Activated CD4-positive, alpha-beta T cell treated with anti-CD3 and anti-CD28 coated beads, Interleukin-2, amount 10 ng/mL, durations not matched to agents 24 days and 14 days (primary cell): ENCODE measurements at regions of chr3 and their contacts with region 1.

Region 1: DNA sequence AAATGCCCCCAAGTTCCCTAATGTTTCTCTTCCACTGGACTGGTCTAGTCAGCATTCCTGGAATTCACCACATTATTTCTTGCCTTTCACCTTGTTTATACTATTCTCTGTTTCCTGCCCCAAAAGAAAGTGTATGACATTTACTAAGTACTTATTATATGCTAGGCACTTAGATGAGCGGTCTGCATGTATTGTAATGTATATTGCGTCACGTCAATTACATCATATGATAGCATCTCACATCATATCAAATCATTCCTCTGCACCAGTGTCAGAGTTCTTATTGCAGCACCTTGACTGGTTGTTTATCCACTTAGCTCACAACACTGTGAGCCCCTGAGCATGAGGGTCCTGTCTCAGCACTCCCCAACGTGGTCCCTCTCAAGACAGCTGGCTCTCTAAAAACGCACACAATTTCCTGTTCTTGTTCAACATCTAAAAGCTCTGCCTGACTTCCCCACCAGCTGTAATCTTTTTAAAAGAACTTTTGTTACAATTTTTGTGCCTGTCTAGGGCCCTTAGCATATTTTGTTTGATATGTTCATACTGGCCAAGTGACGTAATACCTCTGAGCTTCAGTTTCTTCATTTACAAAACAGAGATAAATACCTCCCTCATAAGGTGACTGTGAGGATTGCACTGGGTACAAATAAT is 58.8 kb downstream of the ARHGAP31 start:
- DNase-seq: peak; percentile 60
- H3K4me3 Mint-ChIP-seq: peak overlapping the region; percentile 14
- H3K27ac Mint-ChIP-seq: no peak overlapping the region
- H3K4me1 Mint-ChIP-seq: peaks cover 22% of the 10 kb centered on the region
- H3K27me3 Mint-ChIP-seq: peaks cover 5% of the 10 kb centered on the region

Region 2: DNA sequence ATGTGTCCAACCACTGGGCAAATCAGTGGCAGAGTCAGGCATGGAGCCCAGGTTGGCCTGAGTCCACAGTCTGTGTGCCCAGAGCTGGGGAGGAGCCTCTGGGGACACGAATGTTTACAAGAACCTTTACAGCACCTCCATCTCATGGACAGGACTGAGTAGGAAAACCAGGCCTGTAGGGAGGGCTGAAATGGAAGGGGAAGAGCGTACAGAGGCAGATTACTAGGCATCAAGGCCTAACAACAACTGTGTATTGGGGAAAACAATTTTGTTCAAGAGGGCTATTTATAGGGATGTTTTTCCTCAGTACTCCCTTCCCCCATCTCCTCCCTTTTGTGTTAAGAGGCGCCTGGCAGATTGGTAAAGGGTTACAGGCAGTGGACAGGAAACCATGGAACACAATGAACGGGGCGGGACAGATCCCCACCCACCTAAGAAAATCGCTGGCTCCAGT is 73.8 kb before region 1 on chr3:
- intact Hi-C with region 1: loop called (anchors 1 kb)
- DNase-seq: no peak
- H3K4me3 Mint-ChIP-seq: no peak overlapping the region
- H3K27ac Mint-ChIP-seq: no peak overlapping the region
- H3K4me1 Mint-ChIP-seq: peaks cover 7% of the 10 kb centered on the region
- H3K27me3 Mint-ChIP-seq: peaks cover 5% of the 10 kb centered on the region

Region 3: DNA sequence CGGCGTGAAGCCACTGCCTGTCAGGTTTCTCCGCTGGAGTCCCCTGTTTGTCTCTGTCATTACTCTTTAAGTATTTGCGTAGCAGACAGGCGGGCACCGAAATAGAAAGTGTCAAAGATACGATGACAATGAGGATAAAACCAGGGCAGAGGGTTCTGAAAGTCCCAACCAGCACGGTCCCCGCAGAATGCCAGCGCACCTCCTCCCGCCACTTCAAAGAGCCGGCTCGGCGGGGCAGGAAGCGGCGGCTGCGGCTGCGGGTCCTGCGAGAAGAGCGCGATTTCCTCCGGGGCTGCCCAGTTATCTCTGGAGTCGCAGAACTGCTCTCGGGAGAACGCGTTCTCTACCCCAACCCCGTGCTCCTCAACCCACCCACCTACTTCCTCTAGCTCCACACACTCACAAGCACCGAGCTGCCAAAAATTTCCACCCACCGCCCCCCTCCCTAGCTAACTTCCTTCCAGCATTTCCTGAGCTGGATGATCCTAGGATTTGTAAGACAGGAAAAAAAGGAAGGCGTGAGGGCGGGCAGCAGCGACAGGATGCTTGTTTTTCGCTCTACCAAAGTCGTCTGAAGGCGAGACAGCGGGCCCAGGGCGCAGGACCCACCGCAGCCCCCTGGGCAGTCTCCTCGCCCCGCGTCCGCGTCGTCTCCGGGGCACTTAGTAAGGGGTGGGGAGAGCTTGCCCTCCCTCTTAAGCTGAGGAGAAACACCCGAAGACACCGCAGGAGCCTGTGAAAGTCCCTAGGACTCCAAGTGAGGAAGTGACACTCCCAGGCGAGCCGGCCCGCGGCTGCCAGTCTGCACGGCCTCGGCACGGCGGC is 58.9 kb before region 1 on chr3 and contains the start of gene ARHGAP31:
- intact Hi-C with region 1: loop called (anchors 1 kb)
- DNase-seq: peak; percentile 95
- H3K4me3 Mint-ChIP-seq: peak within 1 kb of the TSS; percentile 86
- H3K27ac Mint-ChIP-seq: peak within 1 kb of the TSS; percentile 89
- H3K4me1 Mint-ChIP-seq: peaks cover 37% of the 10 kb centered on the region
- H3K27me3 Mint-ChIP-seq: peaks cover 14% of the 10 kb centered on the region
- total RNA-seq, gene ARHGAP31: 9.5 and 11.0 TPM in 2 replicates